Motor neuron (in vitro differentiated cells): ENCODE measurements at regions of chr1 and their contacts with region 1.

Region 1: GRCh38 chr1:111481387-111482221 is 7.8 kb downstream of the C1orf162 start:
- ATAC-seq: peak; percentile 90 to 99 (median 97)
- H3K4me3 ChIP-seq: no peak overlapping the region
- H3K27ac ChIP-seq: no peak overlapping the region
- H3K4me1 ChIP-seq: no peaks in the 10 kb centered on the region

Region 2: DNA sequence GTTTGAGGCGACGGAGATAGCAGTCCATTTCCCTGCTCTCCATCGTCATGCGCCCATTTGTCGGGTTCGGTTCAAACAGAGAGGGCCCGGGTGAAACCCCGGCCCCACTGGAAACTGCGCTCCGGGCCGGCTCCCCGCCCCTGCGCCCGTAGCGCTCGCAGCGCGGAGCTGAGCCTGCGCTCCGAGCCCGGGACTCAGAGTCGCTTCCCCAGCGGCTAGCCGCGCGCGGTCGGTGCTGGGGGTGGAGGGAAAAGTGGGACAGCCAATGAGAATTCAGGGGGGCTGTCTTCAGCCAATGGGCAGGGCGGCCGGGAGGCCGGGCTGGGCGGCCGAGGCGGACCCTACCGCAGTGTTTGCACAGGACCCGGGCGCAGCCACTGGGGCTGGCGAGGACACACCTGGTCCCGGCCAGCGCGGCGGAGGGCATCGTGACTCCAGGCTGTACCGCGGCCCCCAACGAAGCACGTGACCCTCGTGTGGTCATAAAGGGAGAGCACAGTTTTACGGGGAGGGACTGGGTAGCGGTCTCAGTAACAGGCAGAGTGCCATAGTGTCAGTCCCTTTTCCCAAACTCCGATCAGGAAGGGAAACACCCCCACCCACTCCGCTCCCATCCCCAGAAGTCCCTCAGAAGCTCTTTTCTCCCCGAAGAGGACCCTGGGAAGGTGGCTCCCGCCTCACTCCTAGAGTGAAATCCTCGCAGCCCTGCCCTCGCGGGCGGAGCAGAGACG is 257.8 kb after region 1 on chr1 and contains the start of gene INKA2:
- in situ Hi-C with region 1: loop called in 1 of 9 experiments (anchors 25 kb)
- ATAC-seq: peak; percentile 75 to 91 (median 87)
- H3K4me3 ChIP-seq: peak within 1 kb of the TSS; percentile 46 to 53 (median 46)
- H3K27ac ChIP-seq: peak within 1 kb of the TSS; percentile 78 to 84
- H3K4me1 ChIP-seq: peaks cover 27 to 29% of the 10 kb centered on the region in 2 donors
- total RNA-seq, gene INKA2: 1.3 to 14.3 (median 4.7) TPM

Region 3: GRCh38 chr1:111755331-111756123 is 273.9 kb after region 1 on chr1 and contains the start of gene DDX20:
- in situ Hi-C with region 1: loop called in 3 of 9 experiments (anchors 10 to 25 kb)
- ATAC-seq: peak; percentile 82 to 91 (median 89)
- H3K4me3 ChIP-seq: peak within 1 kb of the TSS; percentile 71 to 95 (median 88)
- H3K27ac ChIP-seq: peak within 1 kb of the TSS; percentile 95 to 96
- H3K4me1 ChIP-seq: peaks cover 15 to 19% of the 10 kb centered on the region in 2 donors
- total RNA-seq, gene DDX20: 8.6 to 26.1 (median 14.9) TPM